ENCODE measurements at regions of chr11 and their contacts with region 1.

Region 1: GRCh38 chr11:27485930-27486773 is 13.6 kb upstream of the LGR4 start:
- DNase-seq: no peak
- ATAC-seq: peak; percentile 33
- H3K4me3 Mint-ChIP-seq: no peak overlapping the region
- H3K27ac Mint-ChIP-seq: no peak overlapping the region
- H3K4me1 Mint-ChIP-seq: no peaks in the 10 kb centered on the region
- H3K27me3 Mint-ChIP-seq: no peaks in the 10 kb centered on the region

Region 2: DNA sequence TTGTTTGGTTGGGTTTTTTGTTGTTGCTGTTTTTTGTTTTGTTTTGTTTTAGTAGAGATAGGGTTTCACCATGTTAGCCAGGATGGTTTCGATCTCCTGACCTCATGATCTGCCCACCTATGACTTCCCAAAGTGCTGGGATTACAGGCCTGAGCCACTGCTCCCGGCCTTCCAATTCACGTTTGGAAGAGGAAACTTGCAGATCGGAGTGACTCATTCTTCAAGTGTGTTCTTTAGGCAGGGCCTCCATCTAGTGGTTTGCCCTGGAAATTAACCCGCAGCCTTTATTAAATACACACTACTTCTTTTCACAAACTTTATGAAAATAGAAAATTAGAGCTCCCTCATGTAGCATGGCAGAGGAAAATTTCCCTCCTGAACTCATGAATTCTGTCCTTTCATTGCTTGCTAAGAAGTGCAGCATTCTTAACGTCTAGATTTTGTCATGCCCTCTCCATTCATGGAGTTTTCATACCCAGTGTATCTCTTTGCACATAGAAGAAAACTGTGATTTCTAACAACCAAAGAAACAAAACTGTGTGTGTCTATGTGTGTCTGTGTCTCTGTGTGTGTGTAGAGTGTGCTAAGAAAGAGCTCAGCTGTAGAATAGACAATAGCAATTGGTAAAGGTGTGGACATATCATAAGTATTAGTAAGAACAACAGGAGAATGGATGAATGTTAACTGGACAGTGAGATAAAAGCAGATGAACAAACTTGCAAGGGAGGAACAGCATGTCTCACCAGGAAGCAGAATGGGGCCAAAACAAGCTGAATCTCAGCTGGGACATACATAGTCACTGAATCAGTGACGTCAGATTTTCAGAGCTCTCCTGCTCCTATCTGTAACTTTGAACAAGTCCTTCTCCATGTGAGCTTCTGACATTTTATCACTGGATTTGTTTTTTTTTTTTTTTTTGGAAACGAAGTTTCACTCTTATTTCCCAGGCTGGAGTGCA is 327.2 kb before region 1 on chr11:
- CTCF ChIA-PET with region 1: interaction called, 10 read pairs
- DNase-seq: peak; percentile 41
- ATAC-seq: no peak
- H3K4me3 Mint-ChIP-seq: no peak overlapping the region
- H3K27ac Mint-ChIP-seq: no peak overlapping the region
- H3K4me1 Mint-ChIP-seq: no peaks in the 10 kb centered on the region
- H3K27me3 Mint-ChIP-seq: no peaks in the 10 kb centered on the region

Region 3: GRCh38 chr11:27183672-27184457 is 302.3 kb before region 1 on chr11:
- CTCF ChIA-PET with region 1: interaction called, 42 read pairs
- DNase-seq: no peak
- ATAC-seq: no peak
- H3K4me3 Mint-ChIP-seq: no peak overlapping the region
- H3K27ac Mint-ChIP-seq: no peak overlapping the region
- H3K4me1 Mint-ChIP-seq: no peaks in the 10 kb centered on the region
- H3K27me3 Mint-ChIP-seq: peaks cover 7% of the 10 kb centered on the region

Region 4: DNA sequence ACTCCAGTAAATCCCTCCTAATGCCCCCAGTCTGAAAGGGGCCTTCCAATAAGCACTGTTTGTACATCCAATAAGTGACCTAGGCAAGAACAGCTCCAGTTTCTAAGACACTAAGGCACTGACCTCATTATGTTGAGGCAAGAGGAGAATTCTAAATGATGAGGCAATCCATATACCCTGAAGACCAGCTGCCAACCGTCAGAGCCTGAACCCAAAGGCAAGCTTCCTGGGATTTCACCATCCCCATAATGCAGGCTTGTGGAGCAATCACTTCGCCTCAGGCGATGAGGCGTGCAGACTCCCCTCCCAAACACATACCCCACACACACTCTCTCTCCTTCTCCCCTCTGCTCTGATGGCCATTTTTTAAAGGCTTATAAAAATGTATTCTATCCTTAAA is 63.0 kb before region 1 on chr11:
- CTCF ChIA-PET with region 1: no interaction called
- DNase-seq: no peak
- ATAC-seq: no peak
- H3K4me3 Mint-ChIP-seq: no peak overlapping the region
- H3K27ac Mint-ChIP-seq: no peak overlapping the region
- H3K4me1 Mint-ChIP-seq: no peaks in the 10 kb centered on the region
- H3K27me3 Mint-ChIP-seq: peaks cover 15% of the 10 kb centered on the region

Region 5: GRCh38 chr11:27472398-27473016 is 13.6 kb before region 1 on chr11 and contains the start of gene LGR4:
- CTCF ChIA-PET with region 1: interaction called, 22 read pairs
- DNase-seq: peak; percentile 63
- ATAC-seq: peak; percentile 78
- H3K4me3 Mint-ChIP-seq: peak within 1 kb of the TSS; percentile 79
- H3K27ac Mint-ChIP-seq: no peak within 1 kb of the TSS
- H3K4me1 Mint-ChIP-seq: peaks cover 9% of the 10 kb centered on the region
- H3K27me3 Mint-ChIP-seq: peaks cover 64% of the 10 kb centered on the region
- total RNA-seq, gene LGR4: 0.29 to 0.42 TPM

Region 6: GRCh38 chr11:27497284-27497866 is 11.2 kb after region 1 on chr11:
- CTCF ChIA-PET with region 1: interaction called, 34 read pairs
- DNase-seq: no peak
- ATAC-seq: peak; percentile 47
- H3K4me3 Mint-ChIP-seq: no peak overlapping the region
- H3K27ac Mint-ChIP-seq: no peak overlapping the region
- H3K4me1 Mint-ChIP-seq: peaks cover 6% of the 10 kb centered on the region
- H3K27me3 Mint-ChIP-seq: no peaks in the 10 kb centered on the region

Measured in activated CD8-positive, alpha-beta memory T cell treated with anti-CD3 and anti-CD28 coated beads, Interleukin-2, amount 10 ng/mL, durations not matched to agents 7 days and 5 days (primary cell).